Gastrocnemius medialis (tissue), 4 donors: ENCODE measurements at regions of chr5 and their contacts with region 1.

Region 1: DNA sequence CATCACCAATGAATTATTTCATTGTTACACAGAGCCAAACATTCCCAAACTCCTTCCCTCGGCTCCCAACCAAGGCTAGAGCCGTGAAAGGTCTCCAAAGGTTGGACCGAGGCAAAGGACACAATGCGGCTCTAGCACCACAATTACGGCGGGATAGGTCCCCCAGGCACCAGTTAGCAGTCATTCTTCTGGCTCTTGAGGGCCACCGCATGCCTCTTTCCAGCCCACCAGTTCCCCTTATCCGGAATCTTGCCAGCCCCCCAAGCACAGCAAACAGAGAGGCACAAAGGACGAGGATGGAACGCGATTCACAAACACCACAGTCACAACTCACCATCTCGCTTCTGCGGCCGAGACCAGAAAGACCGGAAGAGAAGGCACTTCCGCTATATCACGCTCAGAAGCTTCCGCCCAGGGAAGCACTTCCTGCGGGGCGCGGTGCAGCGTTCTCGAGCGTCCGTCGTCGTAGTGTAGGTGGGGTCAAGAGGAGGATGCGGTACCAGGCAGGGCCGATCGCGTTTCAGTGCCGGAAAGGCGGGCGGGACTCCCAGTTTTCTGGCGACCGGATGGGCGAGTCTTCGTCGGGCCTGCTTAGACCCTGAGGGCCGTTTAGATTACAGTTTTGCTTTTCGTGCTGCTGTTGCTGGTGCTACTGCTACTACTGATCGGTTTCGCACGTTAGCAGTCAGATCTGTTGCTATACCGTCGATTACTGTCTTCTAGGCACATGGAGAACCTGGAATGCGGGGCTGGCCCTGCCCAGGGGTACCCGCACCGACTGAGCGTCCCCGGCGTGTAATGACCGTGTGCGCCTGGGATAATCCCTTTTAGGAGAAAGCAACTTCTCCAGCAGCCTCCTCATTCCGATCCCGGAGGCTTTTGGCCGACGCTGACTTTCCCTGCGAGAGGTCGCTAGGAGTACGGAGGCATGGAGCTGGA is at the start of gene RPL37:
- DNase-seq: peak; percentile 95 to 96
- ATAC-seq: peak; percentile 98 to 99
- H3K4me3 ChIP-seq: peak within 1 kb of the TSS; percentile 73 to 95 (median 82)
- H3K27ac ChIP-seq: peak within 1 kb of the TSS; percentile 85 to 97 (median 94)
- H3K4me1 ChIP-seq: peaks cover 27% of the 10 kb centered on the region in 2 donors
- H3K27me3 ChIP-seq: no peaks in the 10 kb centered on the region
- CTCF ChIP-seq: peak in 1 of 5 experiments; percentile 8
- POLR2A ChIP-seq: peak; percentile 87 to 89
- total RNA-seq, gene RPL37: 42.4 to 155 (median 92.9) TPM

Region 2: GRCh38 chr5:40798012-40798855 is 36.9 kb before region 1 on chr5 and contains the start of gene PRKAA1:
- in situ Hi-C with region 1: no loop called
- intact Hi-C with region 1: loop called (anchors 1 kb)
- DNase-seq: peak; percentile 74 to 86
- ATAC-seq: peak; percentile 85 to 86
- H3K4me3 ChIP-seq: peak within 1 kb of the TSS; percentile 91 to 100 (median 99)
- H3K27ac ChIP-seq: peak within 1 kb of the TSS; percentile 89 to 99 (median 98)
- H3K4me1 ChIP-seq: peaks cover 19 to 21% of the 10 kb centered on the region in 2 donors
- H3K27me3 ChIP-seq: no peaks in the 10 kb centered on the region
- CTCF ChIP-seq: peak; percentile 27 to 86 (median 68)
- POLR2A ChIP-seq: peak; percentile 41 to 57
- total RNA-seq, gene PRKAA1: 26.8 to 51.9 (median 36.9) TPM

Region 3: DNA sequence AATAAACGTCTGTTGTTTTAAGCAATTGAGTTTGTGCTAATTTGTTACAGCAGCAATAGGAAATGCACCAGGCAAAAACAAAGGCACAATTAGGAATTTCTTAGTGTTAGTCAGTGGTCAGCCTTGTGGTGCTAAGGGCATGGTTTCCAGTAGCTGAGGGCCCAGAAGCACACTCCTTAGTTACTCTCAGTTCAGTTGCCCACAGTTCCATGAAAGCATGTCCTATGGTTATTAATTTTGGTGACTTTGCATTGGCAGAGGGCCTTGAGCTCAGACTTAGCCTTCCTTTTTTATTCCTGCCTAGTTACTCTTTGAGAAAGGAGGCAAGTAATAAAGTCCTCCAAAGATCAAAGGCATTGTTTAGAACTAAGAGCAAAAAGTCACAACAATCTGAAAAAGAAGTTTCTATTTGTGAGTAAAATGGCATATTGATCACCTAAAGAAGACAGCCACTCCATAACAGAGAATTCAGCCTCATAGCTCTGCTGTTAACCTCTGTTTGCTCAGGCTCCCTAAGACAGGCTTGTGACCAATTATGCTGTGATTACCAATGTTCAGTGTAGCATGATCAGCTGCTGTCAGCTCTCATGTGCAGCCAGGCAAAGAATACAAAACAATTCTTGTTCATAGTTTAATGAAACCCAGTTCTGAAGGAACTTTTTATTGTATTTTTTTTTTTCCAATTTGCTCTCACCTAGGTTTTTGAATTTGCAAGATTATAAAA is 293.0 kb after region 1 on chr5:
- in situ Hi-C with region 1: no loop called
- intact Hi-C with region 1: no loop called
- DNase-seq: no peak
- ATAC-seq: no peak
- H3K4me3 ChIP-seq: no peak overlapping the region
- H3K27ac ChIP-seq: no peak overlapping the region
- H3K4me1 ChIP-seq: no peaks in the 10 kb centered on the region
- H3K27me3 ChIP-seq: no peaks in the 10 kb centered on the region
- CTCF ChIP-seq: no peak
- POLR2A ChIP-seq: no peak